ENCODE measurements at regions of chr15 and their contacts with region 1.

Region 1: DNA sequence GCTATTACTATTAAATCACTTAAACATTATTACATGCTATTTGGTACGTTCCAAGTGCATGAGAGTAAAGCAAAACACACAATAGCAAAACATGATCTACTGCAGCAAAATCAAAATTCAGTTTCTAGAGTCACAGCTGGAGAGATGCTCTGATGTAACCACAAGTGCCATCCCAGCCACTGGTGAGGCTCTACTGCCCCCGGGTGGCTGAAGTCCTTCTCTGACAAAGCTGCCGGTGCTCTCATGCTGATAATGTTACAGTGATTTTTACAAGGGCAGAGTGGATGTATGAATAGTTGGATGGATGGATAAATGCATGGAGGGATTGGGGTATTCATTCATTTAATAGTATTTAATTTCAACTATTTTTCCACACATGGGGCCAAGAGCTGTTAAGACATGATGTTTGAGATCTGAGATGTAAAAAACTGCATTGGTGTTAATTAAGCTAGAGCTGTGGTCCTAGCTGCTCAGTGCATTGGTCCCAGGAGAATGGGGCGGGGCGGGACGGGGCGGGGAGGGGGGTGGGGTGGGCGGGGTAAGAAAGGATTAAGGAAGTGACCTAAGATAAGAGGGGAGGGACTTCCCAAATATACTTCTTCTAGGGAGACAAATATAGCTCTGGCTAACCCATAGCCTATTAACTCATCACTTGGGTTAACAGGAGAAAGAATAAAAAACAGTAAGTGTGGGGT is 5.3 kb upstream of the SPESP1 start:
- DNase-seq: peak; percentile 88
- H3K4me3 ChIP-seq: no peak overlapping the region
- H3K27ac ChIP-seq: no peak overlapping the region
- H3K4me1 ChIP-seq: peaks cover 19% of the 10 kb centered on the region
- CTCF ChIP-seq: peak; percentile 100

Region 2: DNA sequence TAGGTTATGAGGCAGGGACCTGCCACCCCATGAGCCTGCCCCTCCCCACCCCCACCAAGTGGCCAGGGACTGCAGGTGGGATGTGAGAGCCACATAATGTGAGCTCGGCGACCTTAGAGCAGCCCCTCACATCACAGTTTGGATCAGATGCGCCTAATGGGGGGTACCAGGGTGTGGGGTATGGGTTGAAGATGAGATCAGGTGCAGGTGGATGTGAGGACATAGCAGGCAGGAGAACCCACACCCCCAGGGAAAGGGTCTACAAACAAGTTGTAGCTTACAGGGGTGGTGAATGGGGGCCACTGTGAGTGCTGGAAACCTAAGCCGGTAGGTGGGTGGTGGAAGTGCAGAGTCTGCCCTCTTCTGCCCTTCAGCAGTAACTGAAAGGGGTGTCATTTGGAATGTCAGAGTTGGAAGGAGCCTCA is 252.2 kb before region 1 on chr15:
- CTCF ChIA-PET with region 1: interaction called, 3 read pairs
- POLR2A ChIA-PET with region 1: interaction called, 4 read pairs
- intact Hi-C with region 1: loop called (anchors 5 kb)
- DNase-seq: peak; percentile 70
- H3K4me3 ChIP-seq: no peak overlapping the region
- H3K27ac ChIP-seq: peak overlapping the region; percentile 14
- H3K4me1 ChIP-seq: peaks cover 47% of the 10 kb centered on the region
- CTCF ChIP-seq: peak; percentile 76

Region 3: DNA sequence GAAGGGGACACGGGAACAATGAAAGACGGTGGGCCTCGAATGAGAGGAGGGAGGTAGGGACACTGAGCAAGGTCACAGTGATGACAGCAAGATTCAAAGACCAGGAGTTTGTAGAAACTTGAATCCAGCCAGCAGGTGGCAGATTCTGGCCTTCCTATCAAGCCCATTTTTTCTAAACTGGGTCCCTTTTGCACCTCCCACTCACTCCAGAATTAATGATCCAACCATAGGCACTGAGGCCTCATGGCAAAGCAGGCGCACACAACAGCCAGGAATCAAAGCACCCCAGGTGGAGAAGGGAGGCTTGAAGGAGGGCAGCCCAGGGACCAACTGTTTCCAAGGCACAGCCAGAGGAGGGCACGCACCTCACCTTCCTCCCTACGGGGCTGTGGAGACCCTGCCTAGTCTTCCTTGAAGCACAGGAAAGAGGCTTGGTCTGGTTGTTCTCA is 194.5 kb before region 1 on chr15:
- CTCF ChIA-PET with region 1: no interaction called
- POLR2A ChIA-PET with region 1: no interaction called
- intact Hi-C with region 1: loop called (anchors 1 kb)
- DNase-seq: peak; percentile 71
- H3K4me3 ChIP-seq: no peak overlapping the region
- H3K27ac ChIP-seq: no peak overlapping the region
- H3K4me1 ChIP-seq: peaks cover 7% of the 10 kb centered on the region
- CTCF ChIP-seq: peak; percentile 86

Region 4: DNA sequence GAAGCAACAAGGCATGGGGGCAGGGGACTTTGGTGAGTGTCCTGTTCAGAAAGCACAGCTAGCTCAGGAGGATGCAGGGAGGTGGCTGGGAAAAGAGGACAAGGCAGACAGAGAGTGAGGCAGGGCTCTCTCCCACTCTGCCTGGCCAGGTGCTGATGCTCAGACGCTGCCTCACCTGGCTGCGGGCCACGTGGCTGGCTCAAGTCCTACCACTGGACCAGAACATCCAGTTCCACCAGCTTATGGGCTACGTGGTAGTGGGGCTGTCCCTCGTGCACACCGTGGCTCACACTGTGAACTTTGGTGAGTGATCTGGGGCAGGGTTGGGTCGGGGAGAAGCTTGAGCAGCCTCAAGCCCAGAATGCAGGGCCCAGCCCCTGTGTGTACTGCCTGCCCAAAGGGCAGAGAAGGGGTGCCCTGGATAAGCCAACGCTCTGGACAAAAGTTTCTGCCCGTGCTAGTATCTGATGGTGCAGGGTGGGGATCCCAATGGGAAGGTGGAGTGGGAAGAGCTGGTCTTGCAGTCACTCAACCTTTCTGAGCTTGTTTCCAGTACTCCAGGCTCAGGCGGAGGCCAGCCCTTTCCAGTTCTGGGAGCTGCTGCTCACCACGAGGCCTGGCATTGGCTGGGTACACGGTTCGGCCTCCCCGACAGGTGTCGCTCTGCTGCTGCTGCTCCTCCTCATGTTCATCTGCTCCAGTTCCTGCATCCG is 110.3 kb after region 1 on chr15:
- CTCF ChIA-PET with region 1: no interaction called
- POLR2A ChIA-PET with region 1: no interaction called
- intact Hi-C with region 1: no loop called
- DNase-seq: no peak
- H3K4me3 ChIP-seq: no peak overlapping the region
- H3K27ac ChIP-seq: no peak overlapping the region
- H3K4me1 ChIP-seq: no peaks in the 10 kb centered on the region
- CTCF ChIP-seq: no peak

Region 5: GRCh38 chr15:69320977-69321554 is 396.1 kb after region 1 on chr15:
- CTCF ChIA-PET with region 1: no interaction called
- POLR2A ChIA-PET with region 1: no interaction called
- intact Hi-C with region 1: no loop called
- DNase-seq: no peak
- H3K4me3 ChIP-seq: no peak overlapping the region
- H3K27ac ChIP-seq: no peak overlapping the region
- H3K4me1 ChIP-seq: no peaks in the 10 kb centered on the region
- CTCF ChIP-seq: no peak

Region 6: DNA sequence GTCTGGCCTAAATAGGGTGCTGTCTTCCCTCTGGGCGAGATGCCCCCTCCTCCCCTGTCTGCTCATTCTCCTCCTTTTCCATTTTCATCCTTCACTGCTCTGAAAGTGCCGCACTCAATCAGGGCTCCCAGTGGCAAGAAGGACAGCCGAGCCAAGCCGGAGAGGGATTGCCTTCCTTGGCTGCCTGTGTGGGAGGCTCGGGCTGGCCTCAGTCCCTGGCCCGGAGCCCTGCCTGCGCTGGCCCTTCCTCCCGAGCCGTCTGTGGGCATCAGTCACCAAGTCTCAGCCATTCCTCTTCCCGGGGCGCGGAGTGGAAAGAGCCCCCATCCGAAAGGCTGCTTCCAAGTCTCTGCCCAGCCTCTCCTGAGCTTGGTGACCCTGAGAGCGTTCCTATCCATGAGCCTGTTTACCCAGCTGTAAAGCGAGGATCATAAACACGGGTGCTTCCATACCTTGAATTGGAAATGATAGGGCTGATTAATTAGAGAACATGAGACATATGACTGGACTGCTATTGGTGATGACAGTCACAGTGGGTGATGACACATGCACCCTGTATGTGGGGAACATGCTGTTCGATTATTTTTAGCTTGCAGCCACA is 1231.8 kb after region 1 on chr15:
- CTCF ChIA-PET with region 1: no interaction called
- POLR2A ChIA-PET with region 1: interaction called, 10 read pairs
- intact Hi-C with region 1: no loop called
- DNase-seq: no peak
- H3K4me3 ChIP-seq: no peak overlapping the region
- H3K27ac ChIP-seq: no peak overlapping the region
- H3K4me1 ChIP-seq: no peaks in the 10 kb centered on the region
- CTCF ChIP-seq: no peak

Measured in OCI-LY7 (cell line).